Endothelial cell of umbilical vein (primary cell): ENCODE measurements at regions of chr9 and their contacts with region 1.

Region 1: DNA sequence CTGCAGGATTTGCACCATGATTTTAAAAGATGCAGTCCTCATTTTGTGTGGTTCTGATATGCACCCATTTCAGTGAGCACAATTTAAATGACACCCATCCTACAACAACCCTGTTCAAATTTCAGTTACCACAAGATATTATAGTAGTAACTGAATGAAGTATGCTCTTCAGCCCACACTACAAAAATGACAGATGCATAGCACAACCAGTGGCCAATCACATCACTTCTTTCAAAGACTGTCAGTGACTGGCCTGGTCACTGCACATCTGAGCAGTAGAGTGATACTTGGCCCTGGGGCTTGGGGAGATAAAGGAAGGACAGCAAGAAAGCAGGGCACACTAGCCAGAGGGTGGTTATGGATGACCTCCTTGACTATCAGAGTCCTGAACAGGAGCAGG is 19.8 kb upstream of the IFNK start:
- DNase-seq: no peak
- H3K4me3 ChIP-seq: no peak overlapping the region
- H3K27ac ChIP-seq: no peak overlapping the region
- H3K4me1 ChIP-seq: peaks cover 8% of the 10 kb centered on the region
- H3K27me3 ChIP-seq: peaks cover 0 to 4% of the 10 kb centered on the region in 2 experiments
- CTCF ChIP-seq: no peak
- POLR2A ChIP-seq: no peak

Region 2: DNA sequence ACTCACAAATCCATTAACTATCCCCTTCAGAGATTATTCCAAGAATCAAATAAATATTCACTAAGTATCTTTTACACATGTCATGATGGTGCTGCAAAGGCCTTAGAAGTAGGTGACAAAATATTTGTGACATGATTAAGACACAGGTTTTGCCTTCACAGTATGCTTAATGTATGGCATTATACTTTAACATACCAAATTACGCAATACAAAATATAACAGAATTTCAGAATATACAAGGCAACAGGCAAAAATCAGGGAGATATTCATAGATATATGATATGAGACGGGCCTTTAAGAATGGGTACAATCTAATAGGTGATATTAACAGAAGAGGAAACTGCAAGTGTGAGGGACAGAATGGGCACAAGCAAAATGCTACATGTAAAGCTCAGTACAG is 653.3 kb before region 1 on chr9:
- CTCF ChIA-PET with region 1: no interaction called
- POLR2A ChIA-PET with region 1: no interaction called
- dilution Hi-C with region 1: no loop called
- intact Hi-C with region 1: loop called (anchors 5 kb)
- DNase-seq: no peak
- H3K4me3 ChIP-seq: no peak overlapping the region
- H3K27ac ChIP-seq: no peak overlapping the region
- H3K4me1 ChIP-seq: no peaks in the 10 kb centered on the region
- H3K27me3 ChIP-seq: no peaks in the 10 kb centered on the region
- CTCF ChIP-seq: no peak
- POLR2A ChIP-seq: no peak

Region 3: GRCh38 chr9:27385606-27386322 is 118.5 kb before region 1 on chr9:
- CTCF ChIA-PET with region 1: no interaction called
- POLR2A ChIA-PET with region 1: no interaction called
- dilution Hi-C with region 1: no loop called
- intact Hi-C with region 1: no loop called
- DNase-seq: no peak
- H3K4me3 ChIP-seq: no peak overlapping the region
- H3K27ac ChIP-seq: no peak overlapping the region
- H3K4me1 ChIP-seq: no peaks in the 10 kb centered on the region
- H3K27me3 ChIP-seq: peaks cover 6 to 24% of the 10 kb centered on the region in 2 experiments
- CTCF ChIP-seq: no peak
- POLR2A ChIP-seq: no peak